Lower leg skin (tissue), 4 donors: ENCODE measurements at regions of chr3 and their contacts with region 1.

Region 1: DNA sequence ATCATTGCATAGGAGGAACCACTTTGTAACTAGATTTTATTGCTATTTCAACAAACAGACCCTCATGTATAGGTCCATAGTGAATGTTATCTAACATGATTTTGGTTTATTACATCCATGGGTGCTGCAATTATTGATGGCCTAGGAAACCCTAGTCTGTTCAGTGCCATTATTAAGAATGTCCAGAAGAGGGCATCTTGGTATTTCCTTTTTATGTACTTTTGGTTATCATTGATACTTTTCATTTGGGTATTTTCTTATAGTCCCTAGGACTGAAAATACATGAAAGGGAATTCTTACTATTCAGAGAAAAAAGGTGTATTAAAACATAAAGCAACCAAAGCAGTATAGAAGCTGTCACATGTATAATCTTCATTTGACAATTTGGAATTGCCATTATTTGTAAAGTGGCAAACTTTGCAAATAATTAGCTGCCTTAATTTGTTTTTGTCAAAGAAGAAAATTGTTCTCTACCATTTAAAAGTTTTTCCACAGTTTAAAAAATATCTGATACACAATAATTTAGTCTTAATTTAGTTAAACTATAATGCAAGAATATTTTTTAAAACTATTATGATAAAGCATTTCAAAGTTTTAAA is 48.7 kb downstream of the CNOT10 start:
- DNase-seq: no peak
- H3K4me3 ChIP-seq: no peak overlapping the region
- CTCF ChIP-seq: no peak
- POLR2A ChIP-seq: no peak

Region 2: DNA sequence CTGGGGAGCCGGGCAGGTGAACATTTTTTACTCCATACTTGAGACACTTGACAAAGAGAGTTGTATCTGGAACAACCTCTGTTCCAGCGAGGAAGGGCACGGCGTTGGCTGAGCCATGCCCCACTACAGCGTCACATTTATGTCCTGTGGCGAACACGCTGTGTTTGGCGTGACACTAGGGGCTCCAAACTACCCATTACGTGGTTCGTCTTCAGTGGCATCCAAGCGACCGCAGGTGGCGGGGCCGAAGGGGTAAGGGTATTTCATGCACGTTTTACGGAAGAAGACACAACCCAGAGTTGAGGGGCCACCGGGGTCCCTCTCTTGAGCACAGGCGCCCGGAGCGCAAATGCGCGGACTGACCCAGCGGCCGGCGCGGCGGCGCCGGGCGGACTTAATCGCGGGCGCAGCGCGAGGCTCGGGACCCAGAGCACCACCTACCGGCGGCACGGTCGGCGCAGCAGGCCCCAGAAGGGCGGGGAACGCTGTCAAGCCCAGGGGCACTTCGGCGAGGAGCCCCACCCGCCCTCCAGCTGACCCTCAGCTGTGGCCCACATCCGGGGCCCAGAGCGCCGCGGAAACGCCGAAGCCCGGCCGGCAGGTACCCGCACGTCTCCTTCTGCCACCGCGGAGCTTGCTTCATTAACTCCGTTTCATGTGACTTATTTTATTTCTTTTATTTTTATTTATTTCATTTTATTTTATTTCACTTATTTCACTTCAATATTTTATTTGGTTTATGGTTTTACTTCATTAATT is 47.7 kb after region 1 on chr3:
- intact Hi-C with region 1: no loop called
- DNase-seq: peak; percentile 21 to 90
- H3K4me3 ChIP-seq: peak overlapping the region; percentile 10
- CTCF ChIP-seq: no peak
- POLR2A ChIP-seq: no peak

Region 3: DNA sequence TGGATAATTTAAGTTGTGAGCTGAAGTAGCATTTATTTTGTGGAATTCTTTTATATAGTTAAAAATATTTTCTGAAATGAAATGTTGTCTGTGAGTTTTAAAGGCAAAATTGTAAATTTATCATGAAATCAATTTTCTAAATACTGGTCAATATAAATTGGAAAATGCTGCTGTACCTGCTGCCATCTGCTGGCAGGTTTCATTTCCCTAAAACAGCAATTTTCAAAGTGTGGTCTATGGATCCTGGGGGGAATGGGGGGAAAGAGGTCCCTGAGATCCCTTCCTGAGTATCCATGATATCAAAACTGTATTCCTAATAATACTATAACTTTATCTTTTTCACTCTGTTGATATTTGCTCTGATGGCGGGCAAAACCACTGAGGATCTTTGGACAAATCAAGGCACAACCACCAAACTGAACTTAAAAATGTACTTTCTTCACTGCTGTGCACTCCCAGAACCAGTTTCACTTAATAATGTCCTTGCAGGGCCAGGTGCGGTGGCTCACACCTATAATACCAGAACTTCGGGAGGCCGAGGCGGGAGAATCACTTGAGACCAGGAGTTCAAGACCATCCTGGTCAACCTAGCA is 200.5 kb after region 1 on chr3:
- intact Hi-C with region 1: loop called (anchors 10 kb)
- DNase-seq: peak in 1 of 2 donors; percentile 62
- H3K4me3 ChIP-seq: no peak overlapping the region
- CTCF ChIP-seq: no peak
- POLR2A ChIP-seq: no peak